Sciatic nerve (tissue), 2 donors: ENCODE measurements at regions of chr22 and their contacts with region 1.

Region 1: GRCh38 chr22:43698403-43698802 is 113.7 kb downstream of the EFCAB6 start:
- DNase-seq: no peak
- ATAC-seq: no peak

Region 2: DNA sequence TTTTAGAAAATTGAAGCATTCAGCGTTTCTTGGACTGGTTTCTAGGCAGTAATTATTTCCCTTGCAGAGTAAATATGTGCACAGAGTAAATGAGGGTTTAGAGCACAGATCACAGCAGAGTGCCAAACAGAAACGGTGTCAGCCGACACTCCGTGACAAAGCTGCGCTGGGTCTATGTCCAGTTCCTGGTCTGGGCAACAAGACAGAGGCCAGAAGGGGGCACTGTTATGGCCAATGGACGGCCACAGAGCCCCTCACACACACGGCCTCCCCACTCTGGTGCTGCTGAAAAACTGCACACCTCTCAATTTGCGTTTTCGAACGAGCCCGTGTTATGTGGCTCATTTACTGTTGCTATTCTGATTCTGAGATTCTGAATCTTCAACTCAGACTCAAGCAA is 105.9 kb before region 1 on chr22:
- intact Hi-C with region 1: loop called (anchors 5 kb)
- DNase-seq: no peak
- ATAC-seq: no peak

Region 3: GRCh38 chr22:43726322-43726721 is 27.9 kb after region 1 on chr22:
- intact Hi-C with region 1: no loop called
- DNase-seq: no peak
- ATAC-seq: peak; percentile 87

Region 4: GRCh38 chr22:43837666-43838065 is 139.3 kb after region 1 on chr22:
- intact Hi-C with region 1: no loop called
- DNase-seq: no peak
- ATAC-seq: no peak